Activated CD4-positive, alpha-beta T cell treated with anti-CD3 and anti-CD28 coated beads for 36 hours (primary cell): ENCODE measurements at regions of chr9 and their contacts with region 1.

Region 1: DNA sequence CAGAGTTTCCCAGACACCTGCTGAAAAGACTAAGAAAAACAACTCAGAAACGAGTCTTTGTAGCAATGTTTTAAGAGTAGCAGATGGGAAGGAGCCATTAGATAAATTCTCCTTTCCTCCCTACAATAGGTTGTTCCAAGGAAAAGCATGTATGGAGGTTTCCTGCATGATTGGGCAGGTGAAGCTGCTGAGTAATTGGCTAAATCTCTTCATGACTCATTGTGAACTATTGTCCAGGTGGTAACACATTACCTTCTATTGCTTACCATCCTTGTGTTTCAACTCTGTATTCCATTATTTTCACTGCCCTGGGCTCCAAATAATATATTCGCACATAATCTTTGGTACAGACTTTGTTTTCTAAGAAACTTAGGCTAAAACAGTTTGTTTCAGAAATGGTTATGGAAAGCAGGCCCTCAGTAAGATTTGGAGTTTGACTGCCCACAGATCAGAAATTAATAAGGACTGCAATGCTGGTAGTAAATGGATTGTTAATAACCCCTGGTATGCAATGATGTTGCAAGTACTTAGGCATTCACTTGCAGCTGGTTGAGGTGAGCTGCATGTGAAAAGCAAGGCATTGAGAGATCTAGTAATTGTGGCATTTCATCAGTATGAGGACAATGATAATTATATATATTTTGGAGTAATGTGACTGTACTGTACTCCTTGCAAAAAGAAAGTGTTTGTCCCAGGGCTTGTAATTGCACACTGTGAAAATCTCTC is 281.4 kb upstream of the VLDLR start:
- DNase-seq: no peak
- ATAC-seq: no peak
- H3K4me3 Mint-ChIP-seq: no peak overlapping the region
- H3K27ac Mint-ChIP-seq: no peak overlapping the region
- H3K4me1 Mint-ChIP-seq: no peaks in the 10 kb centered on the region
- H3K27me3 Mint-ChIP-seq: peaks cover 7% of the 10 kb centered on the region

Region 2: DNA sequence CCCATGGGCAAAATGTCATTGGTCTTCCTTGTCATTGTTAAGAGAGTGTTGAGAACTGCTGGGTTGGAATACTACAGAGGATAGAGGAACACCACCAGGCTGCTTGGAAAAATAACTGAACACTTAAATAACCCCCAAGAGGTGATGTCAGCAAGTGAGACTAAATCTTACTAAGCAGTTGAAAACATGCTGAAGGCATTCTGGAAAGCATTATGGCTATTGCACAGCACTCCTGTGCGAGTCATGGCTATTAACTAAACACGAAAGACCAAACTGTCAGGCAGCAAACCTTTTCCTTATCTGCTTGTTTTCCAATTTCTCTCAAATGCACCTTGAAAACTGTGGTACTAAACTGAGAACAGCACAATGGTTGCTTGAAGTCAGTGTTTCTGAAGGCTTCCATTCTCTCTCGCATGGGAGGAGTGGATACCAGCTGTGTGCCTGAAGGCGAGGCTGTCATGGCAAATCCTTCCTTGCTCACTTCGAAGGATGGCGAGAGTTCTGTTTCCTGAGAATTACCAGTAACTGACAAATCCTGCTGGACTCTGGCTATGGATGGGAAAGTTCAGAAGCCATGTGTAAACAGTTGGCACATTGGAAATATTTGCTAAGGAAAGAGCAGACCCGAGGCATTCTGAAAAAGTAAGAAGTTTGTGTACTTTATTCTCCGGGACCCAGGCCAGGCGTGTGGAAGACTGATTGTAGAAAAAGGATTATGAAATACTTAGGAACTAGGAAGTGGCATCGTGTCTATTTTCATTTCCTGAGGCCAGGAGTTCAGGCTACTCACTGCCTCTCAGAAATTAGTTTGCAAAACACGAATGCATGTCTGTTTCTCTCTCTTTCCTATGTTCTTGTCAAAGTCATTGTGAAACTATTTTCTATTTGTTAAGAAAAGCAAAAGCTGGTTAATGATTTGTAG is 1108.0 kb before region 1 on chr9:
- CTCF ChIA-PET with region 1: no interaction called
- POLR2A ChIA-PET with region 1: no interaction called
- intact Hi-C with region 1: no loop called
- DNase-seq: no peak
- ATAC-seq: no peak
- H3K4me3 Mint-ChIP-seq: no peak overlapping the region
- H3K27ac Mint-ChIP-seq: no peak overlapping the region
- H3K4me1 Mint-ChIP-seq: no peaks in the 10 kb centered on the region
- H3K27me3 Mint-ChIP-seq: no peaks in the 10 kb centered on the region

Region 3: GRCh38 chr9:2116073-2116472 is 224.1 kb before region 1 on chr9:
- CTCF ChIA-PET with region 1: no interaction called
- POLR2A ChIA-PET with region 1: no interaction called
- intact Hi-C with region 1: no loop called
- DNase-seq: peak; percentile 30
- ATAC-seq: no peak
- H3K4me3 Mint-ChIP-seq: no peak overlapping the region
- H3K27ac Mint-ChIP-seq: no peak overlapping the region
- H3K4me1 Mint-ChIP-seq: no peaks in the 10 kb centered on the region
- H3K27me3 Mint-ChIP-seq: no peaks in the 10 kb centered on the region

Region 4: DNA sequence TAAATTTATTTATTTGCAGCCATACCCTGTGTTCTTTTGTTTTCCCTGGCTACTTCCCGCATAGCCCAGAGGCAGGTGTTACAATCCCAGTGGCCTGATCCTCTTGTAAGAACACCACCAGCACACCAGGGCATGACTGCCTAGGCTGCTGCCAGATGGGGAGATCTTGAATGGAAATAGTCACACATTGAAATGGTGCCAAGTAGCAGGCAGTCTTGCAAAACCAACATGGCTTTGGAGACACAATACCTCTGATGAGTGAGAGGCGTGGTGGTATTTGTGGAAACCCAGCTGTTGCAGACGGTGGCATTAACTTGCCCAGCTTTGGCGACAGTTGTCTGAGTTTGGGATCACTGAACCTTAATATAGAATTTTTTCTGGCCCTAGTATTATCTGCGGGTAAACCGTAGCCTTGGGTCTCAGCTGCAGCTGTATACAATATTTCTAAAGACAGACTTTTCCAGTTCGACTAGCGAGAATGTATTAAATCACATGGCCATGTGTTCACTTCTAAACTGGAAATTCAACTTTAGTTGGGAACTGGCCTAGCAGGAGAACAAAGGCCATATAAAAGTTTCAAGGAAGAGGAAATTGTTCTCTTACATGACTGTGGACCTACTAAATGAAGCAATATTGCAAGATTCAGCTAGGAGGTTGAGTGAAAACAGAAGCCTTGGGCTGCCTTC is 48.1 kb before region 1 on chr9:
- CTCF ChIA-PET with region 1: no interaction called
- POLR2A ChIA-PET with region 1: no interaction called
- intact Hi-C with region 1: no loop called
- DNase-seq: no peak
- ATAC-seq: no peak
- H3K4me3 Mint-ChIP-seq: no peak overlapping the region
- H3K27ac Mint-ChIP-seq: no peak overlapping the region
- H3K4me1 Mint-ChIP-seq: no peaks in the 10 kb centered on the region
- H3K27me3 Mint-ChIP-seq: peaks cover 7% of the 10 kb centered on the region

Region 5: DNA sequence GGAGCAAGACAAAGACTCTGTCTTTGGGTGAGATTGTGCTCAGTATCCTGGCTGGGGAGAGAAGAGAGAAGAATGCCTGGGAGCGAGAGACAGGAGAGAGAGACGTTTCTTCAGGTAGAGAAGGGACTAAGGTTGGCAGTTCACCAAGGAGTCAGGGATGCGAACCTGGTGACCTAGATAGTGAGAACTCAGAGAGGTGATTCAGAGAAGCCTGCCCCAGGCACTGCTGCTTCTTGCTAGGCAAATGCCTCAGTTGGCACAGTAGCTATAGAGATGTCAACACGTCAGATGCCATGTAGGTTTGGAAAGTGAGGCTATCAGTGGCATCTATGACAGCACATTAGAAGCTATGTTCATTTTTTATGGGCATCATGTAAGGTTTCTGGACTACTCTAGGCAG is 49.8 kb after region 1 on chr9:
- CTCF ChIA-PET with region 1: no interaction called
- POLR2A ChIA-PET with region 1: no interaction called
- intact Hi-C with region 1: loop called in 1 of 2 experiments (anchors 5 kb)
- DNase-seq: no peak
- ATAC-seq: no peak
- H3K4me3 Mint-ChIP-seq: no peak overlapping the region
- H3K27ac Mint-ChIP-seq: no peak overlapping the region
- H3K4me1 Mint-ChIP-seq: no peaks in the 10 kb centered on the region
- H3K27me3 Mint-ChIP-seq: peaks cover 7% of the 10 kb centered on the region

Region 6: DNA sequence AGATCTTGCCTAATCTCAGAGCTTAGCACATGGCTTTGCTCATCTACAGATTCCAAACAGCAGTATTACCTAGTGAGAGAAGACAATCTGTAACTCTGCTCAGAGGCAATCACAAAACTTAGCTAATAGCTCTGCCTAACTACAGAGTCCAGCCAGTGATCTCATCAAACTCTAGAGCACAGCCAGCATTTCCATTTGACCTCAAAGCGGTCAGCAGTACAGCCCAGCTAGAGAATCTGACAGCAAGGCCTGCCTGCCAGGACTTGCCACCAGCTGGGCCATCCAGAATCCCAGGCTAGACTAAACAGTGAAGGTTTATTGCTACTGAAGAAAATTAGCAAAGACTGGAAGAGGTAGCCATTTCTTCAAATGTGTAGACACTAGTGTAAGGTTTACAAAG is 63.5 kb after region 1 on chr9:
- CTCF ChIA-PET with region 1: no interaction called
- POLR2A ChIA-PET with region 1: no interaction called
- intact Hi-C with region 1: loop called in 1 of 2 experiments (anchors 10 kb)
- DNase-seq: no peak
- ATAC-seq: no peak
- H3K4me3 Mint-ChIP-seq: no peak overlapping the region
- H3K27ac Mint-ChIP-seq: no peak overlapping the region
- H3K4me1 Mint-ChIP-seq: no peaks in the 10 kb centered on the region
- H3K27me3 Mint-ChIP-seq: peaks cover 5% of the 10 kb centered on the region